CD4-positive, alpha-beta memory T cell (primary cell): ENCODE measurements at regions of chr10 and their contacts with region 1.

Region 1: DNA sequence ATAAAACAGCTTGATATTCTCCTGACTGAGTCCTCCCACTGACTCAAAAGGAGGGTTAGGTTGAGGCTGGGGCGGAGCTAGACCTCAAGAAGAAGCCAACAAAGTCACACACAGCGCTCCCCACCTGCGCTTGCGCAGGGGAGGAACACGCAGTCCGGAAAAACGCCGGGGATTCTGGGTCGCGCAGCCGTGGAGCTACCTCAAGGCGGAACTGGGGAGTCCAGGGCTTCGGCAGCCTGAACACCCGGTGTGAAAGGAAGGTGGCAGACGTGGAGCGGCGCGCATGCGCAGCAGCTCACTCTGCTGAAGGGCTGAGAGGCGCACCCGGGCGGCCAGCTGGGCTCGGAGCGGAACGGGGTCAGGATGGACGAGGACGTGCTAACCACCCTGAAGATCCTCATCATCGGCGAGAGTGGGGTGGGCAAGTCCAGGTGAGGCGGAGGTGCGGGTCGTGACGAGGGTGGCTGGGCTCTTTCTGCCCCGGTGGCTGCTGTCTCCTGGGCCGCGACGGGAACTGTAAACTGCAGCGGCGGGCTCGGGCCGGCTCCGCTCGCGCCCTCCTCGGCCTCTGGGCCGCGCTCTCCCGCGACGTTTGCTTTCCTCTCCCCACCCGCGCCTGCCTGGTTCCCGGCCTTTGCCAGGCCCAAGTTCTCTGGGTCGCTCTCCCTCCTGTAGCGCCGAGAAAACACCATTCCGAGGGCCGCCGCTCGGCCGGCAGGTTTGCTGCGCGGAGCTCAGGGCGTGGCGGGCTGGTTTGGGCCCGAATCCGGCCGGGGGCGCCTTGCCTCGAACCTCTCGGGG is at the start of gene RAB18:
- DNase-seq: peak; percentile 97 to 99 (median 99)
- H3K4me3 ChIP-seq: peak within 1 kb of the TSS; percentile 59 to 74
- H3K4me3 Mint-ChIP-seq: peak within 1 kb of the TSS; percentile 96 to 100 (median 99)
- H3K27ac ChIP-seq: peak within 1 kb of the TSS; percentile 90
- H3K27ac Mint-ChIP-seq: peak within 1 kb of the TSS; percentile 96 to 100 (median 99)
- H3K4me1 ChIP-seq: peaks cover 42% of the 10 kb centered on the region
- H3K4me1 Mint-ChIP-seq: peaks cover 44 to 56% (median 51%) of the 10 kb centered on the region in 4 donors
- H3K27me3 ChIP-seq: no peaks in the 10 kb centered on the region
- H3K27me3 Mint-ChIP-seq: no peaks in the 10 kb centered on the region
- total RNA-seq, gene RAB18: 83.3 to 88.5 TPM

Region 2: DNA sequence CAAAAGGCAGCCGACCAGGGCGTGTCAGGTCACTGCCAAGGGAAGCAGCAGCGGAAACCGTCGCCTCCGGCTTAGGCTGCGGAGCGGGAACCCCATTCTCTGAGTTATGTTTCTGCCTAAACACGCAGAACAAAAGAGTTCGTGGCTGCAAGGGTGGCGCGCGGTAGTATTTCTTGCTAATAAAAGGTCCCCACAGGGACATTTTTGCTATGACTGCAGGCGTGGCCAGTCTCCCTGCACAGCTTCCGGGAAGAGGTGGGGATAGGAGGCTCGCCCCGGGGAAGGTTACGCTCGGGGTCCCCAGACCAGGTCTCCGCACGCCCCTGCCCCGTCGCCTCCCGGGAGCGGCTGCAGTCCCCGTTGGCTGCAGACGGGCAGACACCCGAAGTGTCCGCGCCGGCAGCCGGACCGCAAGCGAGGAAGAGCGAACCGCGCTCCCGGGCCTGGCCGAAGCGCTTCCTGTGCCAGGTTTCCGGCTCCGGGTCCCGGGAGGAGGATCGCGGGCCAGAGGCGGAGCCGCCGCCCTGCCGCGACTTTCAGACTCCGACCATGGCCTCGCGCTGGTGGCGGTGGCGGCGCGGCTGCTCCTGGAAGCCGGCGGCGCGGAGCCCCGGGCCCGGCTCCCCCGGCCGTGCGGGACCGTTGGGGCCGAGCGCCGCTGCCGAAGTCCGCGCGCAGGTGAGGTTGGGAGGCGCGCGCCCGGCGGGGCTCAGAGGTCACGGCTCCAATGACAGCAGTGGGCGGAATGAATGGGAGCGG is 806.9 kb before region 1 on chr10 and contains the start of gene PDSS1:
- CTCF ChIA-PET with region 1: no interaction called
- POLR2A ChIA-PET with region 1: interaction called, 6 read pairs
- intact Hi-C with region 1: loop called (anchors 10 kb)
- DNase-seq: peak; percentile 53 to 72 (median 56)
- H3K4me3 ChIP-seq: peak within 1 kb of the TSS; percentile 37 to 81
- H3K4me3 Mint-ChIP-seq: peak within 1 kb of the TSS; percentile 86 to 98 (median 97)
- H3K27ac ChIP-seq: peak within 1 kb of the TSS; percentile 50
- H3K27ac Mint-ChIP-seq: peak within 1 kb of the TSS; percentile 88 to 96 (median 95)
- H3K4me1 ChIP-seq: peaks cover 16% of the 10 kb centered on the region
- H3K4me1 Mint-ChIP-seq: peaks cover 19 to 32% (median 28%) of the 10 kb centered on the region in 4 donors
- H3K27me3 ChIP-seq: no peaks in the 10 kb centered on the region
- H3K27me3 Mint-ChIP-seq: no peaks in the 10 kb centered on the region
- total RNA-seq, gene PDSS1: 3.1 to 3.3 TPM

Region 3: GRCh38 chr10:27155066-27155754 is 349.0 kb before region 1 on chr10 and contains the start of gene MASTL:
- CTCF ChIA-PET with region 1: no interaction called
- POLR2A ChIA-PET with region 1: interaction called, 15 read pairs
- intact Hi-C with region 1: loop called (anchors 1 kb)
- DNase-seq: peak; percentile 94 to 97 (median 96)
- H3K4me3 ChIP-seq: peak within 1 kb of the TSS; percentile 82 to 100
- H3K4me3 Mint-ChIP-seq: peak within 1 kb of the TSS; percentile 95 to 100 (median 98)
- H3K27ac ChIP-seq: peak within 1 kb of the TSS; percentile 100
- H3K27ac Mint-ChIP-seq: peak within 1 kb of the TSS; percentile 100
- H3K4me1 ChIP-seq: peaks cover 40% of the 10 kb centered on the region
- H3K4me1 Mint-ChIP-seq: peaks cover 25 to 67% (median 45%) of the 10 kb centered on the region in 4 donors
- H3K27me3 ChIP-seq: no peaks in the 10 kb centered on the region
- H3K27me3 Mint-ChIP-seq: no peaks in the 10 kb centered on the region
- total RNA-seq, gene MASTL: 7.0 to 7.9 TPM

Region 4: GRCh38 chr10:27383595-27384542 is 120.3 kb before region 1 on chr10:
- CTCF ChIA-PET with region 1: no interaction called
- POLR2A ChIA-PET with region 1: no interaction called
- intact Hi-C with region 1: no loop called
- DNase-seq: no peak
- H3K4me3 ChIP-seq: no peak overlapping the region
- H3K4me3 Mint-ChIP-seq: no peak overlapping the region
- H3K27ac ChIP-seq: no peak overlapping the region
- H3K27ac Mint-ChIP-seq: no peak overlapping the region
- H3K4me1 ChIP-seq: no peaks in the 10 kb centered on the region
- H3K4me1 Mint-ChIP-seq: no peaks in the 10 kb centered on the region
- H3K27me3 ChIP-seq: no peaks in the 10 kb centered on the region
- H3K27me3 Mint-ChIP-seq: peaks cover 23 to 30% of the 10 kb centered on the region in 2 donors

Region 5: GRCh38 chr10:27413387-27413786 is 90.8 kb before region 1 on chr10:
- CTCF ChIA-PET with region 1: no interaction called
- POLR2A ChIA-PET with region 1: no interaction called
- intact Hi-C with region 1: no loop called
- DNase-seq: no peak
- H3K4me3 ChIP-seq: no peak overlapping the region
- H3K4me3 Mint-ChIP-seq: no peak overlapping the region
- H3K27ac ChIP-seq: no peak overlapping the region
- H3K27ac Mint-ChIP-seq: no peak overlapping the region
- H3K4me1 ChIP-seq: no peaks in the 10 kb centered on the region
- H3K4me1 Mint-ChIP-seq: no peaks in the 10 kb centered on the region
- H3K27me3 ChIP-seq: no peaks in the 10 kb centered on the region
- H3K27me3 Mint-ChIP-seq: peaks cover 8 to 16% of the 10 kb centered on the region in 2 donors

Region 6: GRCh38 chr10:27446091-27446918 is 57.9 kb before region 1 on chr10:
- CTCF ChIA-PET with region 1: interaction called, 23 read pairs
- POLR2A ChIA-PET with region 1: interaction called, 5 read pairs
- intact Hi-C with region 1: loop called (anchors 1 kb)
- DNase-seq: peak in 4 of 5 donors; percentile 46 to 50 (median 47)
- H3K4me3 ChIP-seq: no peak overlapping the region
- H3K4me3 Mint-ChIP-seq: peak overlapping the region in 3 of 8 donors; percentile 13 to 41 (median 36)
- H3K27ac ChIP-seq: no peak overlapping the region
- H3K27ac Mint-ChIP-seq: peak overlapping the region in 2 of 7 donors; percentile 8 to 45
- H3K4me1 ChIP-seq: peaks cover 12% of the 10 kb centered on the region
- H3K4me1 Mint-ChIP-seq: peaks cover 3 to 17% (median 13%) of the 10 kb centered on the region in 4 donors
- H3K27me3 ChIP-seq: no peaks in the 10 kb centered on the region
- H3K27me3 Mint-ChIP-seq: no peaks in the 10 kb centered on the region

Region 7: DNA sequence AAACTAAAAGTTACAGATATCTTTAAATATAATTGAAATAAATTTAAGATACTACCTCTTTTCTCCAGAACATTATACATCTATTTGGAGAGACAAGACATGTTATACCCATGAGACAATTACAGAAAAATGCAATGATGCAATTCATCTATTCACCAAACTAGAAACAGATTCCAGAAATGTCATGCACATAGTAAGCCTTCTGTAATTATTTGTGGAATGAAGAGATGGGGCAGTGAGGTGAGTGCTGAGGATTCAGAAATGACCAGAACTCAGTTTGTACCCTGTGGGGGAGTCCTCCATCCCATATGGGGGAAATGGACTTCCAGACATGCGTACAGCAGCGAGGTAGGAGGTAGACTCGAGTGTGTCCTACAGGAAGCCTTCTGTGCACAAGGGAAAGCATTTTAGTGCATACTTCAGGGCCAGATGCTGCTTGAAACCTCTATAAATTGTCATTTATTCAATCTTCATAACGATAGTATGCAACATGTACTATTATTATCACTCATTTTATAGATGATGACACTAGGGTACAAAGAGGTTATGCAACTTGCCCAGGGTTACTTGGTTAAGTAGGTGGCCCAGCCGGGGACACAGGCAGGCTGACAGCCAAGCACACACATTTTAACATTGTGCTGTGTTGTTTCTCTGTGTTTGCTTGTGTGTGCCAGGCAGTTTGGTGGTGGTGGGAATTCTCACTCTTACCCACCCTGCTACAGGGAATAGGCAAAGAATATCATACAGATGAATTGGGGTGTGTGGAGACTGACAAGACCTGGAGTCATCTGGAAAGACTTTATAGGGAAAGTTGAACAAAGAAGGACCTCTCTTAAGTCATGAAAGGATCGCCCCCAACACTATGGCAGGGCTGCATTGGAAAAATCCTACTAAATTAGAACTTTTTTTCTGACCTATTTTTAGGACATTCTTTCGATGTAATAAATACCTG is 142.3 kb after region 1 on chr10:
- CTCF ChIA-PET with region 1: no interaction called
- POLR2A ChIA-PET with region 1: no interaction called
- intact Hi-C with region 1: no loop called
- DNase-seq: no peak
- H3K4me3 ChIP-seq: no peak overlapping the region
- H3K4me3 Mint-ChIP-seq: no peak overlapping the region
- H3K27ac ChIP-seq: no peak overlapping the region
- H3K27ac Mint-ChIP-seq: peak overlapping the region in 1 of 7 donors; percentile 19
- H3K4me1 ChIP-seq: no peaks in the 10 kb centered on the region
- H3K4me1 Mint-ChIP-seq: no peaks in the 10 kb centered on the region
- H3K27me3 ChIP-seq: no peaks in the 10 kb centered on the region
- H3K27me3 Mint-ChIP-seq: peaks cover 11 to 14% of the 10 kb centered on the region in 2 donors

Region 8: GRCh38 chr10:27695706-27696105 is 191.5 kb after region 1 on chr10:
- CTCF ChIA-PET with region 1: no interaction called
- POLR2A ChIA-PET with region 1: no interaction called
- intact Hi-C with region 1: no loop called
- DNase-seq: no peak
- H3K4me3 ChIP-seq: no peak overlapping the region
- H3K4me3 Mint-ChIP-seq: no peak overlapping the region
- H3K27ac ChIP-seq: no peak overlapping the region
- H3K27ac Mint-ChIP-seq: no peak overlapping the region
- H3K4me1 ChIP-seq: no peaks in the 10 kb centered on the region
- H3K4me1 Mint-ChIP-seq: no peaks in the 10 kb centered on the region
- H3K27me3 ChIP-seq: no peaks in the 10 kb centered on the region
- H3K27me3 Mint-ChIP-seq: peaks cover 7 to 14% of the 10 kb centered on the region in 2 donors

Region 9: GRCh38 chr10:28295336-28295735 is 791.1 kb after region 1 on chr10:
- CTCF ChIA-PET with region 1: no interaction called
- POLR2A ChIA-PET with region 1: no interaction called
- intact Hi-C with region 1: loop called (anchors 1 kb)
- DNase-seq: no peak
- H3K4me3 ChIP-seq: no peak overlapping the region
- H3K4me3 Mint-ChIP-seq: no peak overlapping the region
- H3K27ac ChIP-seq: no peak overlapping the region
- H3K27ac Mint-ChIP-seq: peak overlapping the region in 2 of 7 donors; percentile 2 to 22
- H3K4me1 ChIP-seq: peaks cover 34% of the 10 kb centered on the region
- H3K4me1 Mint-ChIP-seq: peaks cover 46 to 70% (median 59%) of the 10 kb centered on the region in 4 donors
- H3K27me3 ChIP-seq: no peaks in the 10 kb centered on the region
- H3K27me3 Mint-ChIP-seq: no peaks in the 10 kb centered on the region

Region 10: GRCh38 chr10:28367929-28368484 is 863.8 kb after region 1 on chr10:
- CTCF ChIA-PET with region 1: no interaction called
- POLR2A ChIA-PET with region 1: interaction called, 4 read pairs
- intact Hi-C with region 1: loop called (anchors 1 kb)
- DNase-seq: peak; percentile 74 to 86 (median 80)
- H3K4me3 ChIP-seq: no peak overlapping the region
- H3K4me3 Mint-ChIP-seq: peak overlapping the region; percentile 41 to 87 (median 80)
- H3K27ac ChIP-seq: peak overlapping the region; percentile 65
- H3K27ac Mint-ChIP-seq: peak overlapping the region; percentile 85 to 98 (median 97)
- H3K4me1 ChIP-seq: peaks cover 58% of the 10 kb centered on the region
- H3K4me1 Mint-ChIP-seq: peaks cover 33 to 61% (median 49%) of the 10 kb centered on the region in 4 donors
- H3K27me3 ChIP-seq: no peaks in the 10 kb centered on the region
- H3K27me3 Mint-ChIP-seq: no peaks in the 10 kb centered on the region